HepG2 (cell line): ENCODE measurements at regions of chr2 and their contacts with region 1.

Region 1: GRCh38 chr2:42141687-42142546 is 27.2 kb upstream of the EML4 start:
- DNase-seq: peak; percentile 94
- ATAC-seq: peak; percentile 77
- H3K4me3 ChIP-seq: peak overlapping the region; percentile 50 to 70 (median 63)
- H3K27ac ChIP-seq: peak overlapping the region; percentile 80
- H3K4me1 ChIP-seq: peaks cover 83% of the 10 kb centered on the region
- H3K27me3 ChIP-seq: no peaks in the 10 kb centered on the region; a peak in 1 of 5 replicates
- CTCF ChIP-seq: no peak
- EP300 ChIP-seq: peak in 1 of 2 experiments; percentile 90; a peak in 2 of 4 replicates
- POLR2A ChIP-seq: peak; percentile 45 to 61; a peak in 2 of 4 replicates
- RAD21 ChIP-seq: no peak

Region 2: DNA sequence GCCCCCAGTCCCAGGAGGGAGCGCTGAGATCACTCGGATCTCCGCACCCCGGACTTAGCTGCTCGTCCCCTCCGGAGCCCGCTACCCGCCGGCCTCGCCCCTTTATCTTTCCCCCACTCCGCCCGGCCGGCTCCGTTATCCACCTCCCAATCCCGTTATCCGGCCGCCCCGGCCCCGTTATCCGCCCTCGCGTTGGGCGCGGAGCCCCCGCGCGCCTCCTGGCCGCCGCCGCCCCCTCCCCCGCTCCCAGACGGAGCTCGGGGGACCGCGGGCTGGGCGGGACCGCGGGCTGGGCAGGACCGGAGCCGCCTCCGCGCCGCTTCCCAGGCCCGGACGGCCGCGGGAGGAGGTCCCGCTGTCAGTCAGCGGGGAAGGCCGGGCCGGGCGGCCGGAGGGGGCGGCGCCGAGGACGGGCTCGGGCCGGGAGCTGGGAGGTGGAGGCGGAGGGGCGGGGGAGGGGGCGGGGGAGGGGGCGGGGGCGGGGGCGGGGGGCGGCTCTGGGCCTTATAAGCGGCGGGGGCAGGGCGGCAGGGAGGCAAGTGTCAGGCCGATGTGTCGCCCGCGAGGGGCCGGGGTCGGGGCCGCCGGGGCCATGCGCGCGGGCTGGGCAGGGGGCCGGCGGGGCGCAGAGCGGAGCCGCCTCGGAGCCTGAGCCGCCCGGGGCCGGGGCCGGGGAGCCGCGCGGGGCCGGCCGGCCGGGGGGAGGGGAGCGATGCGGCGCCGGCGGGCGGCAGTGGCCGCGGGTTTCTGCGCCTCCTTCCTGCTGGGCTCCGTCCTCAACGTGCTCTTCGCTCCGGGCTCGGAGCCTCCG is 94.2 kb before region 1 on chr2 and contains the start of gene PKDCC:
- CTCF ChIA-PET with region 1: no interaction called
- POLR2A ChIA-PET with region 1: interaction called, 5 read pairs
- in situ Hi-C with region 1: no loop called
- intact Hi-C with region 1: loop called (anchors 5 kb)
- DNase-seq: peak; percentile 75
- ATAC-seq: peak; percentile 72
- H3K4me3 ChIP-seq: peak within 1 kb of the TSS; percentile 82 to 95 (median 90)
- H3K27ac ChIP-seq: peak within 1 kb of the TSS; percentile 51
- H3K4me1 ChIP-seq: peaks cover 67% of the 10 kb centered on the region
- H3K27me3 ChIP-seq: peaks cover 0 to 37% of the 10 kb centered on the region in 2 experiments; a peak in 2 of 5 replicates
- CTCF ChIP-seq: no peak
- EP300 ChIP-seq: no peak
- POLR2A ChIP-seq: 0 out of 4 replicates have a peak, but pooled peaks of 1 of the 2 experiments have one; percentile 22
- RAD21 ChIP-seq: peak; percentile 33; the same call in 1 of the 2 replicates
- total RNA-seq, gene PKDCC: 28.5 and 52.6 TPM in 2 replicates

Region 3: DNA sequence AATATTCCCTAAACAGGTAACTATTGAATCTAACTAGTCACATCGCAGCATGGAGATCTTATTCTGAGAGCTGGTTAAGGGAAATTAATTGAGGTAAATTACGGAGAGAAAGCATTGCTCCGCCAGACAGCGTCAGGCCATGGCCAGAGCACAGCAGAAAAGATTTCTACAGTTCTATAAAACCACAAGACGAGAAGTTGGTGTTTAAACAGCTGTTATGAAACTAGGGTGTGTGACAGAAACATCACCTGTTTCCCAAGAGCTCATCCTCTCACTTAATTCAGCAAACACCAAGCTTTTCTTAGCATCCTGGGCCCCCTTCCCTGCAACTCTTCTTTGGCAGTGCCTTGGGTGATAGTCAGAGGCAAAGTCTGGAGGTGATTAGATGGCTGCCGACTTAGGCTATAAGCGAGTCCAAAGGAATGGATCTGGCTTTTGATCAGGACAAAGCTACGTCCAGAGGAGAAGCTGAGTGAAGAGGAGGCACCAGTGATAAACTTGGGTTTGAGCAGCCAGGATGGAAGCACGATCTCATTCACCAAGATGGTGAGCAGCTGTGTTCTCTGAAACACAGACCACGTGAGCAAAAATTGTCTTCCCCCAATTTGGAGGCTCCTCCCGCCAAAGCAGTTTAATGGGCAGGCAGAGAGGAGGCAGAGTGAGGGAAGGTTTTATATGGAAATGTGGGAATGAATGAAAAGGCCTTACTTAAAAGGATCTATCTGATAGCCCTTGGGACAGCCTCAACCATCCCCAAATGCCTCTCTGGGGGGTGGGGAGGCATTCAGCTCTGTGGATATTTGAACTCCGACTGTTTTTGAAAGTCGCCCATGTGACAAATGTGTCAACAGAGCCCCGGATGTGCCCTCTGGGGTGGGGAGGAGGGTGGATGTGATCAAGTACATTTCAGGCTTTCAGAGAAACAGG is 36.3 kb before region 1 on chr2:
- CTCF ChIA-PET with region 1: no interaction called
- POLR2A ChIA-PET with region 1: interaction called, 110 read pairs
- in situ Hi-C with region 1: no loop called
- intact Hi-C with region 1: no loop called
- DNase-seq: peak; percentile 88
- ATAC-seq: peak; percentile 74
- H3K4me3 ChIP-seq: no peak overlapping the region
- H3K27ac ChIP-seq: peak overlapping the region; percentile 76
- H3K4me1 ChIP-seq: peaks cover 92% of the 10 kb centered on the region
- H3K27me3 ChIP-seq: no peaks in the 10 kb centered on the region
- CTCF ChIP-seq: no peak
- EP300 ChIP-seq: peak in 1 of 2 experiments; percentile 97; a peak in 2 of 4 replicates
- POLR2A ChIP-seq: peak in 1 of 2 experiments; percentile 25; a peak in 1 of 4 replicates
- RAD21 ChIP-seq: no peak

Region 4: DNA sequence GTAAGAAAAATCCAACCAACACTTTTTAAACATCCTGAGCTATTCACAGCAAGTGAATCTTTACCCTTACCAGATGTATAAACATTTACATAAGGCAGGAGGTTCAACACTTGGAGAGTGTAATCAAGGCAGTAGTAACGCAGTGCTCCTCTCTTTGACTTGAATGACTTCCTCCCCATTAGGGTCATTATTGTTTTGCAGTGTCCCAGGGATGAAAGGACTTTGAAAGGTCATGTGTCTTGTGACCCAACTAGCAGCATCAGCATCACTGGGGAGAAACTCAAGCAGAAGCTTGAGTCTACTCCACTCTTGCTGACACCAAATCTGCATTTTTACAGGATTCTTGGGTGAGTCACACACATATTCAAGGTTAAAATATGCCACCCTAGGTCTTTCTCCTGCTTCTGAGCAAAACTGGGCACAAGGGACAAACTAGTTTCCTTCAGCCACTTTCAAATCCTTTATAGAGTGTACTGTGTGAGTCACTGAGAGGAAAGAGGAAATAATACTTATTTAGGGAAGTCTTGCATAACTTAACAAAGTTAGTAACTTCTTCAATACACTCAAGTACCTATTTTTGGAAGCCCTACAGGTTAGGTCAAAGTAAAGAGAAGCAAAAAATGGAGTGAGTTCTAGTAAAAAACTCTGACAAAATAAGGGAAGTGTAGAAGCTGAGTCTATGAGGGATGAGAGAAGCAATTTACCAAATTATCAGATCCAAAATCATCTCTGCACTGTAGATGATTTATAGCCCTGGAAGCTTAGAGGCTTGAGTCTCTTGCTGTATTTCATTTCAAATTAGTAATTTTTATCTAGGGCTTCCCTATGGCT is 23.8 kb before region 1 on chr2:
- CTCF ChIA-PET with region 1: no interaction called
- POLR2A ChIA-PET with region 1: interaction called, 100 read pairs
- in situ Hi-C with region 1: no loop called
- intact Hi-C with region 1: loop called (anchors 2 kb)
- DNase-seq: peak; percentile 91
- ATAC-seq: peak; percentile 70
- H3K4me3 ChIP-seq: peak overlapping the region in 2 of 3 experiments; percentile 35 to 37; a peak in 2 of 6 replicates
- H3K27ac ChIP-seq: peak overlapping the region; percentile 71
- H3K4me1 ChIP-seq: peaks cover 74% of the 10 kb centered on the region
- H3K27me3 ChIP-seq: no peaks in the 10 kb centered on the region
- CTCF ChIP-seq: no peak
- EP300 ChIP-seq: peak in 1 of 2 experiments; percentile 95; a peak in 2 of 4 replicates
- POLR2A ChIP-seq: 0 out of 4 replicates have a peak, but pooled peaks of 1 of the 2 experiments have one; percentile 17
- RAD21 ChIP-seq: no peak

Region 5: DNA sequence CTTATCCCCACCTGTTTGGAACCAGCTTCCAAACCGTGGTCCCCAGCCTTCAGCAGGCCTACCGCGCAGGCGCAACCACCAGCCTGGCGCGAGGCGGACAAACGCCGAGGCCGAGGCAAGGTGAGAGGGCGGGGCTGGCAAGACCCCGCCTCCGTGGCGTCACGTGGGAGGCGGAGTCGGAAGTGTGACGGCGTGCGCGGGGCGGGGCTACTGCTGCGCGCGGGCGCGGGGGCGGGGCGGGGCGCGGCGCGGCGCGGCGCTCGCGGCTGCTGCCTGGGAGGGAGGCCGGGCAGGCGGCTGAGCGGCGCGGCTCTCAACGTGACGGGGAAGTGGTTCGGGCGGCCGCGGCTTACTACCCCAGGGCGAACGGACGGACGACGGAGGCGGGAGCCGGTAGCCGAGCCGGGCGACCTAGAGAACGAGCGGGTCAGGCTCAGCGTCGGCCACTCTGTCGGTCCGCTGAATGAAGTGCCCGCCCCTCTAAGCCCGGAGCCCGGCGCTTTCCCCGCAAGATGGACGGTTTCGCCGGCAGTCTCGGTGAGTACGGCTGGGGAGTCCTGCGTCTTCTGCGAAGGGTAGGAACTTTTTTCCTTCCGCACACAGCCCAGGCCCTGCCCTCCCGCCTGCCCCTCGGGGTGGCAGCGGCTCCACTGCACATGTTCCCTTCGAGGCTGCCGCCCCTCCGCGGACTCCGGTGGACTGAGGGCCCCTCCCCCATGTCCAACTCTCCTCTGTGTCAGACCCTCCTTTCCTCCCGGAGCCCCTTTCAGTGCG is 27.4 kb after region 1 on chr2 and contains the start of gene EML4:
- CTCF ChIA-PET with region 1: no interaction called
- POLR2A ChIA-PET with region 1: interaction called, 18 read pairs
- in situ Hi-C with region 1: no loop called
- intact Hi-C with region 1: loop called (anchors 2 kb)
- DNase-seq: peak; percentile 82
- ATAC-seq: peak; percentile 90
- H3K4me3 ChIP-seq: peak within 1 kb of the TSS; percentile 95 to 98 (median 95)
- H3K27ac ChIP-seq: peak within 1 kb of the TSS; percentile 78
- H3K4me1 ChIP-seq: peaks cover 35% of the 10 kb centered on the region
- H3K27me3 ChIP-seq: no peaks in the 10 kb centered on the region; a peak in 1 of 5 replicates
- CTCF ChIP-seq: peak; percentile 10; the same call in 1 of the 2 replicates
- EP300 ChIP-seq: no peak
- POLR2A ChIP-seq: peak; percentile 75 to 88
- RAD21 ChIP-seq: peak; percentile 72
- total RNA-seq, gene EML4: 243 and 362 TPM in 2 replicates

Region 6: DNA sequence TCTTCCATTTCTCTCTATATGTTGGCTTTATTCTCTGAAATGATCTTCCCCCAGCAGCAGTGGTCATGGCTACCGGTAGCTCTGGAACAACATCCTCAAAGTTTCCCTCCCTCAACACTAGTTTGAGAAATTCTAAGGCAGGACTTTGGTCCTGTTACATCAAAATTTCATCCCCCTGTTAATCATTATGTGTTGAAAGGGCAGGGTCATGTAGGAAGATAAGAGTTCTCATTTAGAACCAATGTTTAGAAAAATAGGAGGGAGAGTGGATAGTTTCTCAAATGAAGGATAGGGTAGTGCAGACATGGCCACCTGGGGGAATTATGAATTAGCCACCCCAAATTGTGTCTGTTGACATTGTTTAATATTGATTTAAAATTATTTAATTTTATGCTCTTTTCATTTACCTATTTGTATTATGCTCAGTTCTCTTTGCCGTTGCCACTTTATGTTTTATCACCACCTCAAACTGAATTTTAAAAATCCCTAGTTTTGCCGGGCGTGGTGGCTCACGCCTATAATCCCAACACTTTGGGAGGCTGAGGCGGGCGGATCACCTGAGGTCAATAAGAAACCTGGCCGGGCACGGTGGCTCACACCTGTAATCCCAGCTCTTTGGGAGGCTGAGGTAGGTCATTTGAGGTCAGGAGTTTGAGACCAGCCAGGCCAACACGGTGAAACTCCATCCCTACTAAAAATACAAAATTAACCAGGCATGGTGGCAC is 49.5 kb after region 1 on chr2:
- CTCF ChIA-PET with region 1: no interaction called
- POLR2A ChIA-PET with region 1: interaction called, 35 read pairs
- in situ Hi-C with region 1: no loop called
- intact Hi-C with region 1: loop called (anchors 2 kb)
- DNase-seq: peak; percentile 99
- ATAC-seq: peak; percentile 87
- H3K4me3 ChIP-seq: peak overlapping the region in 2 of 3 experiments; percentile 25 to 43; a peak in 2 of 6 replicates
- H3K27ac ChIP-seq: peak overlapping the region; percentile 98
- H3K4me1 ChIP-seq: peaks cover 100% of the 10 kb centered on the region
- H3K27me3 ChIP-seq: no peaks in the 10 kb centered on the region
- CTCF ChIP-seq: no peak
- EP300 ChIP-seq: peak; percentile 80 to 99; a peak in 3 of 4 replicates
- POLR2A ChIP-seq: peak; percentile 59 to 66
- RAD21 ChIP-seq: peak; percentile 26; the same call in 1 of the 2 replicates

Region 7: GRCh38 chr2:42216712-42217111 is 74.8 kb after region 1 on chr2:
- CTCF ChIA-PET with region 1: no interaction called
- POLR2A ChIA-PET with region 1: interaction called, 13 read pairs
- in situ Hi-C with region 1: no loop called
- intact Hi-C with region 1: no loop called
- DNase-seq: no peak
- ATAC-seq: no peak
- H3K4me3 ChIP-seq: no peak overlapping the region
- H3K27ac ChIP-seq: peak overlapping the region; percentile 10
- H3K4me1 ChIP-seq: peaks cover 100% of the 10 kb centered on the region
- H3K27me3 ChIP-seq: no peaks in the 10 kb centered on the region
- CTCF ChIP-seq: no peak
- EP300 ChIP-seq: no peak
- POLR2A ChIP-seq: no peak
- RAD21 ChIP-seq: no peak